CD14-positive monocyte (primary cell): ENCODE measurements at regions of chr19 and their contacts with region 1.

Region 1: DNA sequence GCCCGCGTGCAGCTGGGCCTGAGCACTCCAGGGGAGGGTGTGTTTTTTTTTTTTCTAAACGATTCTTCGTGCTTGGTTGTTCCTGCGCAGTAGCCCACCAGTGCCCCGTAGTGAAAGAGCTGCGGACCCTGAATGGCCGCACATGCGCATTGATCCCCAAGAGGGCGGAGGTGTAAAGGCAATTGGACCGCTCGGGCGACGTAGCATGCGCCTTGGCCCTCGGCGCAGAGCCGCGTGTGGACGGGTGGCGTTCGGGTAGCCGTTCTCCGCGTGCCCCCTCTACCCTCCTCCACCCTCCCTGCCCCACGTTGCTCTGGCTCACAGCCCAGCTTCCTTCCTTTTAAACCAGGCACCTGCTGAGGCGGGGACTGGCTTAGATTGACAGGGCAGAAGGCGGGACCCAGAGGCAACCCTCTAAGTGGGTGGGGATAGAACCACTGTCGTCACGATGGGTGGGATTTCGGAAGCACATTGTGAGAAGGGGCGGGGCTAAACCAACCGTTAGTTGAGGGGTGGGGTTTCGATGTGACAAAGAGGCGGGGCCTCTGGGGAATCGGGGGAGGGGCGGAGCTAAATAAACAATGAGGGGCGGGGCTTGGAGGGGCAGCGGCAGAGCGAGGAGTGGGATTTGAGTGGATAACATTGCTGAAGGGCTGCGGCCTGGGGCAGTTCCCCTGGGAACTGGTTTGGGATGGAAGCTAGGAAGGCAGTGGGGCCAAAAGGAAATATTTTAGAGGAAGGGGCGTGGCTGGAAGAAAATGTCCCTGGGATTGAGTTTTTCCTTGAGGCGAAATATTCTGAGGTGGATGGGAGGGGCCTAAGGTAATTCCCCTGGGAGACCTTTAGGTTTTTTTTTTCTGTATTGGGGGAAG is 543 bp upstream of the NUP62 start:
- DNase-seq: peak; percentile 88 to 96 (median 96)
- H3K4me3 ChIP-seq: peak overlapping the region; percentile 82 to 91 (median 83)
- H3K4me3 Mint-ChIP-seq: peak overlapping the region; percentile 90 to 97
- H3K27ac ChIP-seq: peak overlapping the region; percentile 88 to 95
- H3K27ac Mint-ChIP-seq: peak overlapping the region; percentile 96 to 100 (median 97)
- H3K4me1 ChIP-seq: peaks cover 33 to 49% of the 10 kb centered on the region in 2 donors
- H3K4me1 Mint-ChIP-seq: peaks cover 45% of the 10 kb centered on the region
- H3K27me3 ChIP-seq: no peaks in the 10 kb centered on the region
- H3K27me3 Mint-ChIP-seq: peaks cover 0 to 6% (median 5%) of the 10 kb centered on the region in 3 donors
- CTCF ChIP-seq: no peak

Region 2: GRCh38 chr19:49889687-49890348 is 40.0 kb before region 1 on chr19:
- intact Hi-C with region 1: loop called in 1 of 2 experiments (anchors 5 kb)
- DNase-seq: peak; percentile 79 to 85 (median 84)
- H3K4me3 ChIP-seq: peak overlapping the region; percentile 5 to 65 (median 16)
- H3K4me3 Mint-ChIP-seq: peak overlapping the region; percentile 75 to 82
- H3K27ac ChIP-seq: no peak overlapping the region
- H3K27ac Mint-ChIP-seq: peak overlapping the region in 5 of 7 donors; percentile 24 to 78 (median 46)
- H3K4me1 ChIP-seq: peaks cover 13 to 15% of the 10 kb centered on the region in 2 donors
- H3K4me1 Mint-ChIP-seq: peaks cover 22% of the 10 kb centered on the region
- H3K27me3 ChIP-seq: peaks cover 0 to 9% of the 10 kb centered on the region in 2 donors
- H3K27me3 Mint-ChIP-seq: peaks cover 21 to 48% (median 30%) of the 10 kb centered on the region in 3 donors
- CTCF ChIP-seq: peak; percentile 94

Region 3: DNA sequence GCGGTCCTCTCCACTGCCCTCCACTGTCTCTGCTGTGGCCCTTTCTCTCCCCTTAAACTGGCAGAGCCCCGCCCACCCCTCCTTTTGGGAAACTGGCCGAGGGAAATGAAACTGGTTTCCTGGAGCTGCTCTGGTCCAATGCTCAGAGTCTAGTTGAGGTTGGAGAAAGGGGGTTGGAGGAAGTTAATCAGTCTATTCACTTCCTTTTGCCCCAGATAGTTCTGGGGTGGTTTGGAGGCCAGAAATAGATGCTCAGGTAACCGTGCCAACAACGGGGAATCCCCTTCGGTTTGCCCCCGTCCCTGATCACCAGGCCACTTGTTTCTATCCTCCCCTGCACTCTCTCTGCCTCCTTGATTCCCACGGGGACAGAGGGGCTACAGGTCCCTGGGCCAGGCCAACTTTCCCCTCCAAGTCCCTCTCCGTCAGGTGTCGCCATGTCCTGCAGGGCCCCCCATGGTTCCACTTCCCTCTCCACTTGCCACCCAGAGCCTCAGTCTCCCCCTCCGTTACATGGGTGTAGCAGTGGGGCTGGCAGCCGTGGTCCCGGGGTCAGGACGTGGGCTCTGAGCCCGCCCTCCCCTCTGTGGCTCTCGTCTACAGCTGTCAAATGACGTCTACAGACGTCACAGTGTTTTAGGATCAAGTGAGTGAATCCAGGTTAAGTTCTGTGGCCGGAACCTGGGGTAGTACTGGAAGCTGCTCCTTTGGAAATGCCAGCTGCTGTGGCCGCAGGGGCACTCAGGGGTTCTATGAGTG is 32.8 kb before region 1 on chr19 and contains the start of gene IL4I1:
- intact Hi-C with region 1: loop called in 1 of 2 experiments (anchors 1 kb)
- DNase-seq: peak; percentile 91
- H3K4me3 ChIP-seq: peak within 1 kb of the TSS; percentile 3 to 72 (median 38)
- H3K4me3 Mint-ChIP-seq: peak within 1 kb of the TSS; percentile 76 to 87
- H3K27ac ChIP-seq: peak within 1 kb of the TSS; percentile 99 to 100
- H3K27ac Mint-ChIP-seq: peak within 1 kb of the TSS; percentile 97 to 100 (median 99)
- H3K4me1 ChIP-seq: peaks cover 42 to 43% of the 10 kb centered on the region in 2 donors
- H3K4me1 Mint-ChIP-seq: peaks cover 44% of the 10 kb centered on the region
- H3K27me3 ChIP-seq: peaks cover 0 to 5% of the 10 kb centered on the region in 2 donors
- H3K27me3 Mint-ChIP-seq: peaks cover 14 to 19% (median 17%) of the 10 kb centered on the region in 3 donors
- CTCF ChIP-seq: no peak
- polyA plus RNA-seq, gene IL4I1: 5.6 to 7.6 (median 7.0) TPM

Region 4: DNA sequence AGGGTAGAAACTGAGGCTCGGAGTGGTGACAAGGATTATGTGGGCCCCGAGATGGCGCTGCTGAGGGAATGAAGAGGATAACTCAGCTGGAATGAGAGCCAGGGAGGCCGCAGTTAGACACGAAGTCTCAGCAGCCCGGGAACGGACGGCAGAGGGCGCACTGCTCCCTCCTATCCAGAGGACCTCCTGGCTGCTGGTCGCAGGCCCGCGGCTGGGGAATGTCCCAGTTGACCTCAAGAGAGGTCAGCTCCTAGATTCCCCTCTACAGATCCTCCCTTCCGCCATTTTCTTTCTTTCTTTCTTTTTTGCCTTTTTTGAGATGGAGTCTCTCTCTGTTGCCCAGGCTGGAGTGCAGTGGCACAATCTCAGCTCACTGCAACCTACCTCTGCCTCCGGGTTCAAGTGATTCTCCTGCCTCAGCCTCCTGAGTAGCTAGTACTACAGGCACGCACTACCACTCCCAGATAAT is 607.9 kb after region 1 on chr19:
- intact Hi-C with region 1: no loop called
- DNase-seq: peak; percentile 42 to 66 (median 44)
- H3K4me3 ChIP-seq: no peak overlapping the region
- H3K4me3 Mint-ChIP-seq: no peak overlapping the region
- H3K27ac ChIP-seq: no peak overlapping the region
- H3K27ac Mint-ChIP-seq: no peak overlapping the region
- H3K4me1 ChIP-seq: no peaks in the 10 kb centered on the region
- H3K4me1 Mint-ChIP-seq: no peaks in the 10 kb centered on the region
- H3K27me3 ChIP-seq: no peaks in the 10 kb centered on the region
- H3K27me3 Mint-ChIP-seq: peaks cover 1 to 10% (median 7%) of the 10 kb centered on the region in 3 donors
- CTCF ChIP-seq: peak; percentile 80